MCF 10A (cell line): ENCODE measurements at regions of chr2 and their contacts with region 1.

Region 1: GRCh38 chr2:191245046-191245868 is at the start of gene MYO1B:
- DNase-seq: peak; percentile 90
- H3K4me3 Mint-ChIP-seq: peak within 1 kb of the TSS; percentile 91
- H3K27ac Mint-ChIP-seq: peak within 1 kb of the TSS; percentile 90
- H3K4me1 Mint-ChIP-seq: peaks cover 35% of the 10 kb centered on the region
- H3K27me3 Mint-ChIP-seq: no peaks in the 10 kb centered on the region
- CTCF ChIP-seq: peak; percentile 47
- total RNA-seq, gene MYO1B: 204 and 241 TPM in 2 replicates

Region 2: GRCh38 chr2:191165176-191165643 is 80.0 kb before region 1 on chr2:
- CTCF ChIA-PET with region 1: interaction called, 7 read pairs
- POLR2A ChIA-PET with region 1: interaction called, 144 read pairs
- intact Hi-C with region 1: loop called (anchors 1 kb)
- DNase-seq: peak; percentile 71
- H3K4me3 Mint-ChIP-seq: no peak overlapping the region
- H3K27ac Mint-ChIP-seq: no peak overlapping the region
- H3K4me1 Mint-ChIP-seq: peaks cover 36% of the 10 kb centered on the region
- H3K27me3 Mint-ChIP-seq: no peaks in the 10 kb centered on the region
- CTCF ChIP-seq: peak; percentile 51

Region 3: DNA sequence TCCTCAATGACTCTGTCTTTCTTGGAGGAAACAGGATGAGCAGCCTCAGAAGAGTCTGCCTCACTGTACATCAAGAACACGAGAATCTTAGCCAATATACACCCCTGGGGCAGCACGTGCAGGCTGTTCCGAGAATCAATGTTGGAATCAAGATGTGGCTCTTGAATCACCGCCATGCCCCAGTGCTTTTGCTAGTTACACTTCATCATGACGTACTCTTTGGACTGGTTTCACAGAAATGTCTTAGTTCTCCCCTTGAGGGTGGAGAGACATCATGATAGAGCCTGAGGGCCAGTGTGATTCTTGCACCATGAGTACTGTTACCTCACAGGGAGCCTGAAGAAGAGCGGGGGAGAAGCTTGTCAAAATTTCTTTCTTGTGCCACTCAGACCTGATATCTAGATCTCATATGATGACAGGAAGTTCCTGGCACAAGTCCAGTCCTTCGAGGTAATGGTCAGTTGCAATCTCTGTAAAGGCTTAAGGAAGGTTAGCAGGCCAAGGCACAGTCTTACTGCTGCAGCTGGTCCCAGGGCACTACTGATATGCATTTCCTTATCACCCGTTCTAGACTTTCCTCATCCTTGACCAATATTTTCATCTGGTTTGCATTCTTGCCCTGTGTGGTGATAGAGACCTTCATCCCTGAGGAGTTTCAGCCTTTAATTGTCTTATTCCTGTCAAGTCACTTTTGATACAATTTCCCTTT is 66.3 kb before region 1 on chr2:
- CTCF ChIA-PET with region 1: interaction called, 4 read pairs
- POLR2A ChIA-PET with region 1: interaction called, 144 read pairs
- intact Hi-C with region 1: loop called (anchors 2 kb)
- DNase-seq: peak; percentile 100
- H3K4me3 Mint-ChIP-seq: peak overlapping the region; percentile 31
- H3K27ac Mint-ChIP-seq: peak overlapping the region; percentile 89
- H3K4me1 Mint-ChIP-seq: peaks cover 38% of the 10 kb centered on the region
- H3K27me3 Mint-ChIP-seq: no peaks in the 10 kb centered on the region
- CTCF ChIP-seq: no peak

Region 4: DNA sequence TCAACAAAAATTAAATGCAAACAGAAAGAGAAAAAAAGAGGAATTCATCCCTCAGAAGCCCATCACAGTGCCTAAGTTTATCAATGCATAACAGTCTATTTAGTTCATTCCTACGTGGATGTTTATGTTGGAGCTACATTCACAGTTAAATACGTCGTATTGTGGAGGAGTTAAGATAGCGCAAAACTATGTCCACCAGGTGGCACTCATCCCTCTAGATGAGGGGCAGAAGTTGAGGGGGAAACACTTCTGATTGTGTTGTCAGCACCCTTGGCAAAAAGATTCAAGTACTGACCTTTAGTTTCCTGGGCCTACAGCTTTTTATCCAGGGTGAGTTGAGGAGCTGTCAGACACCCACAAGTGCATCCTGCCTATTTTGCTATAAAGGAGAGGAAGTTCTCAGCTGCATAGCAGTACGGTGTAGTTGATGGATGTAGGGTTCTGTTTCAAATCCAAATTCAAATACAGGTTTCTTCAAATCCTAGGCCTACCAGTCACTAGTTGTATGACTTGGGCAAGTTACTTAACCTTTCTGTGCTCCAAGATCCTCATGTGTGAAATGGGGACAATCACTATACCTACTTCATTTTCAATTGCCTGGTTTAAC is 26.9 kb before region 1 on chr2:
- CTCF ChIA-PET with region 1: interaction called, 14 read pairs
- POLR2A ChIA-PET with region 1: interaction called, 10 read pairs
- intact Hi-C with region 1: loop called (anchors 1 kb)
- DNase-seq: peak; percentile 87
- H3K4me3 Mint-ChIP-seq: no peak overlapping the region
- H3K27ac Mint-ChIP-seq: peak overlapping the region; percentile 82
- H3K4me1 Mint-ChIP-seq: peaks cover 38% of the 10 kb centered on the region
- H3K27me3 Mint-ChIP-seq: no peaks in the 10 kb centered on the region
- CTCF ChIP-seq: peak; percentile 51

Region 5: DNA sequence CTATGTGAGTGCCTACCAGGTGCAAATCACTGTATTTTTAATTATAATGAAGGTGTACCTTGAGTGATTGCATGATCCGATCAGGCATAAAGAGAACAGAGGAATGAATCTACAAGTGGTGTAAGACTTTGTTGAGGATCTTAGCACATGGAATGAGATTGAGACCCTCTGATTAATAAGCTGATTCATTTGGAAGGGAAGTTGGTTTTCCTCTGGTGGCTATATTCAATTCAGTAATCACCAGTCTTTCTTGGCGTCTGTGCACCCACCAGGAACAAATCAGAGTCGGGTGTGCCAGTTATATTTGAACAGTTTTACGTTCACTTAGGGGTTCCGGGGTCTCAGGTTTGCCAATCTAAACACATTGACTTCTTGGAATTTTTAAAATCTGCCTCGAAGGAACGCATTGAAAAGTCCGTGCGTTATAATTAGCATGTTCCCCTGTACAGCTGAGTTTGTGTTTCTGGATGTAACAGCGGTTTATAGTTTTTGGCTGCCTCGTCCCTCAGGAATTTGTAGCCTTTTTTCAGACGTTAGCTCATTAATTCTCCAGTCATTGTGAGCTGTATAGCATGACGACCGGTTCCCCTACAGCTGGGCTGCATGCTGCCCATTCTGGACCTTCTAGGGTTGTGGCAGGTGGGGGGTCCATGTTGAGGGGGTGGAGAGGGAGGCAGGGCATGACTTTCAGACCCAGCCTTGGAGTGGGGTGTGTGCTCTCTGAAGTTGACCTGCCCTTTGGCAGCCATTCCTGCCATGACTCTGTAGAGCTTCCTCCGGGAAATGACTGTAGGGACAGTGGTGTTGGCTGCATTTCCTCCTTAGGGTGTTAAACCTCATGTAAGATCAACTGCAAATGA is 20.3 kb after region 1 on chr2:
- CTCF ChIA-PET with region 1: interaction called, 6 read pairs
- POLR2A ChIA-PET with region 1: interaction called, 11 read pairs
- intact Hi-C with region 1: no loop called
- DNase-seq: peak; percentile 13
- H3K4me3 Mint-ChIP-seq: no peak overlapping the region
- H3K27ac Mint-ChIP-seq: peak overlapping the region; percentile 77
- H3K4me1 Mint-ChIP-seq: peaks cover 42% of the 10 kb centered on the region
- H3K27me3 Mint-ChIP-seq: no peaks in the 10 kb centered on the region
- CTCF ChIP-seq: no peak

Region 6: DNA sequence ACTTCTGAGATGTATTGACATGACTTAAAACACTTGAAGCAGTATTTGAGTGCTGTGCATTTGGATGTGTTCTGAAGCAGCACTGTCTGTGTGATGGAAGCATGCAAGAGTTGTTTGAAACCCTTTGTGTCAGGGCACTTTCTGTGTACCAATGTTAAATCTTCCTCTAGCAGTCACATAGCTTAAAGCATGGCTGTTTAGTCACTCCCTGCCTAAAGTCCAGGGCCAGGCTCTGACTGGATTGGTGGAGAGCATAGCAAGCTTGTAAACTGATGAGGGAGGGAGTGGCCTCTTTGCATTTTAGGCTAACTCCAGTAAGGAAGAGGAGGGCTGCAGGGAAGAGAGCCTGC is 73.4 kb after region 1 on chr2:
- CTCF ChIA-PET with region 1: no interaction called
- POLR2A ChIA-PET with region 1: interaction called, 33 read pairs
- intact Hi-C with region 1: no loop called
- DNase-seq: peak; percentile 84
- H3K4me3 Mint-ChIP-seq: no peak overlapping the region
- H3K27ac Mint-ChIP-seq: peak overlapping the region; percentile 79
- H3K4me1 Mint-ChIP-seq: peaks cover 56% of the 10 kb centered on the region
- H3K27me3 Mint-ChIP-seq: no peaks in the 10 kb centered on the region
- CTCF ChIP-seq: no peak

Region 7: GRCh38 chr2:191376981-191377629 is 131.8 kb after region 1 on chr2:
- CTCF ChIA-PET with region 1: interaction called, 3 read pairs
- POLR2A ChIA-PET with region 1: interaction called, 4 read pairs
- intact Hi-C with region 1: loop called (anchors 2 kb)
- DNase-seq: peak; percentile 92
- H3K4me3 Mint-ChIP-seq: no peak overlapping the region
- H3K27ac Mint-ChIP-seq: peak overlapping the region; percentile 57
- H3K4me1 Mint-ChIP-seq: peaks cover 23% of the 10 kb centered on the region
- H3K27me3 Mint-ChIP-seq: no peaks in the 10 kb centered on the region
- CTCF ChIP-seq: no peak